Ascending aorta (tissue), 2 donors: ENCODE measurements at regions of chr16 and their contacts with region 1.

Region 1: GRCh38 chr16:64478252-64478906 is 643.5 kb downstream of the CDH11 start:
- DNase-seq: no peak
- H3K4me3 ChIP-seq: peak overlapping the region in 1 of 2 donors; percentile 18
- H3K27ac ChIP-seq: peak overlapping the region in 1 of 2 donors; percentile 64
- H3K4me1 ChIP-seq: peaks cover 6 to 29% of the 10 kb centered on the region in 2 donors
- H3K27me3 ChIP-seq: no peaks in the 10 kb centered on the region
- CTCF ChIP-seq: no peak

Region 2: GRCh38 chr16:64339052-64339770 is 139.2 kb before region 1 on chr16:
- intact Hi-C with region 1: no loop called
- DNase-seq: no peak
- H3K4me3 ChIP-seq: no peak overlapping the region
- H3K27ac ChIP-seq: no peak overlapping the region
- H3K4me1 ChIP-seq: no peaks in the 10 kb centered on the region
- H3K27me3 ChIP-seq: no peaks in the 10 kb centered on the region
- CTCF ChIP-seq: no peak

Region 3: DNA sequence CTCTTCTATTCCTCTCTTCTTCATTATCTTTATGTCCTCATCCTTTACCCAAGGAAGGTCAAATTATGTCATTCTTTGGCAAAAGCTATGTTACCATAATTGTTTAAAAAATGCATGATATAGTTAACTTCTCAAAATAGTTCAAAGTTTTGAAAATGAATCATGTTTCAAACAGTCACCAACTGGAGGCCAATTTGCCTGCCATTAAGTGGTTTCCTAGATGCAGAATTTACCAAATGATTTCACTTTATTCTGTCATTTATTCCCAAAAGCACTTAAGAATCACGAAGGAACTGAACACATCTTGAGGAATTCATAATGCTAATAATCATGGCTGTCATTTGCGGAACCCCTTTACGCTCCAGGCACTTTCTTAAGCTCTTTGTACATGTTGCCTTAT is 834.4 kb after region 1 on chr16:
- intact Hi-C with region 1: loop called (anchors 5 kb)
- DNase-seq: no peak
- H3K4me3 ChIP-seq: no peak overlapping the region
- H3K27ac ChIP-seq: peak overlapping the region; percentile 69 to 74
- H3K4me1 ChIP-seq: peaks cover 10 to 31% of the 10 kb centered on the region in 2 donors
- H3K27me3 ChIP-seq: no peaks in the 10 kb centered on the region
- CTCF ChIP-seq: no peak